PC-9 (cell line): ENCODE measurements at regions of chr11 and their contacts with region 1.

Region 1: DNA sequence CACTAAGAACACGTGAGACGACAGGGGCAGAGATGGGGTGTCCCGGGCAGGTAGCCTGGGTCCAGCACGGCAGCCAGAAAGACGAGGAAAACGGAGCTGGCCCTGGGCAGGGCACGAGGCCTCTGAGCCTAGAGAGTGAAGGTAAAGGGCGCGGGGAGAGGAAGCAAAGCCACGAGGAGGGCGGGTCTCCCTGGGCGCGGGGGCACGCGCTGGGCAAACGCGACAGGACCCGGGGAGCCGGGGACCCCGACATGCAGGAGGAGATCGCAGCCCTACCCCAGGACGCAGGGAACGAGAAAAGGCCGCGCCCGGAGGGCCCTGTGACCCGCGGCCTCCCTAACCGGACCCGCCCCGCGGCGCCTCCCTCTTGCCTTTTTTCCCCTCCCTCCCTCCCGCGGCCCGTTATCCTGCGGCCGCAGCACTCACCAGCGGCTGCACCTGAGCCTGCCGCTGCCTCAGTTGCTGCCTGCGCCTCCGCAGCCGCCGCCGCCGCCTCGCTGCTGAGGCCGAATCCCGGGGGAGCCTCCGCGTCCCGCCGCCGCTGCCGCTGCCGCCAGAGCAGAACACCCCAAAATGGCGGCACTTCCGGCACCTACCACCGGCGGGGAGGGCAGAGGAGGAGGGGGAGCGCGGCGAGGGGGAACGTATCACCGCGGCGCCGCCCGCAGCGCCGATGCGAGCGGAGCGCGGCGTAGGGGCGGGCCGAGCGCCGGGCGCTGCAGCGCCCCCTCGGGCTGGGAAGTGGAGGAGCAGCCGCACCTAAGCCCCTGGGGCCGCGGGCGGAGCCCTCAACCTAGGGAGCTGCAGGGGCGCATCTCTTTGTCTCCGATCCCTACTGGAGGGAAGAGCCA is at the start of gene CELF1:
- DNase-seq: peak; percentile 77 to 96
- H3K4me3 ChIP-seq: peak within 1 kb of the TSS; percentile 80
- H3K27ac ChIP-seq: peak within 1 kb of the TSS; percentile 87
- H3K4me1 ChIP-seq: peaks cover 24% of the 10 kb centered on the region
- H3K27me3 ChIP-seq: no peaks in the 10 kb centered on the region
- CTCF ChIP-seq: peak; percentile 85
- total RNA-seq, gene CELF1: 115 and 165 TPM in 2 replicates

Region 2: GRCh38 chr11:47060807-47061206 is 492.0 kb before region 1 on chr11:
- CTCF ChIA-PET with region 1: interaction called, 11 read pairs
- POLR2A ChIA-PET with region 1: no interaction called
- intact Hi-C with region 1: no loop called
- DNase-seq: peak in 1 of 2 experiments; percentile 18
- H3K4me3 ChIP-seq: no peak overlapping the region
- H3K27ac ChIP-seq: no peak overlapping the region
- H3K4me1 ChIP-seq: no peaks in the 10 kb centered on the region
- H3K27me3 ChIP-seq: no peaks in the 10 kb centered on the region
- CTCF ChIP-seq: no peak

Region 3: GRCh38 chr11:47426061-47426956 is 126.5 kb before region 1 on chr11 and contains the start of gene PSMC3:
- CTCF ChIA-PET with region 1: no interaction called
- POLR2A ChIA-PET with region 1: no interaction called
- intact Hi-C with region 1: loop called (anchors 5 kb)
- DNase-seq: peak; percentile 89 to 99
- H3K4me3 ChIP-seq: peak within 1 kb of the TSS; percentile 86
- H3K27ac ChIP-seq: peak within 1 kb of the TSS; percentile 73
- H3K4me1 ChIP-seq: peaks cover 18% of the 10 kb centered on the region
- H3K27me3 ChIP-seq: no peaks in the 10 kb centered on the region
- CTCF ChIP-seq: no peak
- total RNA-seq, gene PSMC3: 160 and 222 TPM in 2 replicates

Region 4: DNA sequence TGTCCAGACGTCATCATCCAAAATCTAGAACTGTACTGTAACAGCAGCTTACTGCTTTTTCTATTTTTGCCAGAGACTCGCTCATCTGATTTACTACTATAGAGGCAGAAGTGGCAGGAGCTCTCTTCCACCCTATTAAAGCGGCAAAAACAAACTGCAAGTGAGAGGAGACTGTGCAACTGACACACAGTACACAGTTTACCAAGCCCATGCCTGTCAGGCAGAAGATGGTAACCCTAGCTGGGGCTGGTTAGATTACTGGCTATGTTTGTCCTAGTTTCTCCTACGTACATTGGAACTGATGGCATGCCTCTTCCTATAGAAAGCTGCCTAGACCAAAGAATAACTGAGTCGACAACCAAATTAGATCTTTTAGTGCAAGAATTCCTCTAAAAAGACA is 51.7 kb before region 1 on chr11:
- CTCF ChIA-PET with region 1: interaction called, 3 read pairs
- POLR2A ChIA-PET with region 1: interaction called, 10 read pairs
- intact Hi-C with region 1: no loop called
- DNase-seq: no peak
- H3K4me3 ChIP-seq: no peak overlapping the region
- H3K27ac ChIP-seq: no peak overlapping the region
- H3K4me1 ChIP-seq: no peaks in the 10 kb centered on the region
- H3K27me3 ChIP-seq: no peaks in the 10 kb centered on the region
- CTCF ChIP-seq: no peak

Region 5: GRCh38 chr11:47565340-47566148 is 12.8 kb after region 1 on chr11 and contains the start of gene PTPMT1:
- CTCF ChIA-PET with region 1: interaction called, 3 read pairs
- POLR2A ChIA-PET with region 1: no interaction called
- intact Hi-C with region 1: loop called (anchors 1 kb)
- DNase-seq: peak; percentile 70 to 79
- H3K4me3 ChIP-seq: peak within 1 kb of the TSS; percentile 95
- H3K27ac ChIP-seq: peak within 1 kb of the TSS; percentile 55
- H3K4me1 ChIP-seq: peaks cover 11% of the 10 kb centered on the region
- H3K27me3 ChIP-seq: no peaks in the 10 kb centered on the region
- CTCF ChIP-seq: no peak
- total RNA-seq, gene PTPMT1: 74.8 and 79.0 TPM in 2 replicates

Region 6: GRCh38 chr11:47599902-47600301 is 47.1 kb after region 1 on chr11:
- CTCF ChIA-PET with region 1: no interaction called
- POLR2A ChIA-PET with region 1: no interaction called
- intact Hi-C with region 1: no loop called
- DNase-seq: no peak
- H3K4me3 ChIP-seq: no peak overlapping the region
- H3K27ac ChIP-seq: no peak overlapping the region
- H3K4me1 ChIP-seq: no peaks in the 10 kb centered on the region
- H3K27me3 ChIP-seq: no peaks in the 10 kb centered on the region; the same call in 1 of the 2 replicates
- CTCF ChIP-seq: no peak